Panc1 (cell line): ENCODE measurements at regions of chr2 and their contacts with region 1.

Region 1: DNA sequence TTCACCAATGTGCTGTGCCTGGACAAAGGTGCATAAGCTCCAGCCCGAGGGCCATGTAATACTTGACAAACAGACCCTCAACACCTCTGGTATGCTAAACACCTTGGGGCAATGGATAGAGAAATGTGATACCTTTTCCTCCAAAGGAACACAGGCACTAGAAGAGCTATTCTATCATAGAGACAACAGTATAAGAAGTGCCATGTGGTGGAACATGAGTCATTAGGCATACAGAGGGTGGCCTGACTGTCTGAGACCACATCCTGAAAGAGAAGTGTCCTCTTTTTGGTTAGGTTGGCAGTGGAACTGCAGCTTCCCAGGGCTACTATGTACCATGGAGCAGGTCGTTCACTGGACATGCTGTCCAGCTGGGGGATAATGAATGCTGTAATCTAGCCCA is 153.9 kb downstream of the INSIG2 start:
- DNase-seq: no peak
- ATAC-seq: no peak
- H3K4me3 ChIP-seq: no peak overlapping the region
- H3K27ac ChIP-seq: no peak overlapping the region
- H3K4me1 ChIP-seq: no peaks in the 10 kb centered on the region
- H3K27me3 ChIP-seq: no peaks in the 10 kb centered on the region
- CTCF ChIP-seq: no peak

Region 2: DNA sequence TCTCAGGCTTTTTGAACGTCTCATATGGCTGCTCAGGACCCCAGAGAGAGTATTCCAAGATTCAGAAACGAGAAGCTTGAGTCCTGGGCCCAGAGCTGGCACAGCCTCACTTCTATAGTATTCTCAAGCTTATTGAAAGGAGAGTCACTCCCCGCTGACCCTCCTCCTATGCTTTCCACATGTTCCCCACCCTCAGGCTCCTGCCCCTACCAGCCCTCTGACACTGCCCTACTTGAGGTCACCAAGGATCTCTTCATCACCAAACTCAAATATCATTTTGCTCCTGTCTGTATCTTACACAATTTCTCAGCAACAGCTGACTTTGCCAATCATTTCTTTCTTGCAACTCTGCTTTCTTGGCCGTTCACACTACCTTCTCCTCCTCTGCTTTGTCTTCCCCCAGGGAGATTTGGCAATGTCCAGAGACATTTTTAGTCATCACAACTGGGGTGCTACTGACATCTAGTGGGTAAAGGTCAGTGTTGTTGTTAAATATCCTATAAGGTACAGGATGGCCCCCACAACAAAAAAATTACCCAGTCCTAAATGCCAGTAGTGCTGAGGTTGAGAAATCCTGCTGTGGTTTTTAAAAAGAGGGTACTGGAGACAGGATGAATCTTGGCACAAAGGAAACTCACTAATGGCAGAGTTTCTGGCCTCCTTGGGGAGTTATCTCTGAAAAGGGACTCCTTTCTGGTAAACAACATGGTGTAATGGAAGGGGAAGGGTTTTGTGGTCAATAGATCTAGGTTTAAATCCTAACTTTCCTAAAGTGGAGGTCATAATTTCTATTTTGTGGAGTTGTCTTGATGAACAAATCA is 180.9 kb before region 1 on chr2:
- CTCF ChIA-PET with region 1: no interaction called
- POLR2A ChIA-PET with region 1: no interaction called
- in situ Hi-C with region 1: no loop called
- intact Hi-C with region 1: no loop called
- DNase-seq: peak; percentile 15
- ATAC-seq: no peak
- H3K4me3 ChIP-seq: no peak overlapping the region
- H3K27ac ChIP-seq: no peak overlapping the region
- H3K4me1 ChIP-seq: no peaks in the 10 kb centered on the region
- H3K27me3 ChIP-seq: peaks cover 5% of the 10 kb centered on the region
- CTCF ChIP-seq: peak; percentile 48

Region 3: DNA sequence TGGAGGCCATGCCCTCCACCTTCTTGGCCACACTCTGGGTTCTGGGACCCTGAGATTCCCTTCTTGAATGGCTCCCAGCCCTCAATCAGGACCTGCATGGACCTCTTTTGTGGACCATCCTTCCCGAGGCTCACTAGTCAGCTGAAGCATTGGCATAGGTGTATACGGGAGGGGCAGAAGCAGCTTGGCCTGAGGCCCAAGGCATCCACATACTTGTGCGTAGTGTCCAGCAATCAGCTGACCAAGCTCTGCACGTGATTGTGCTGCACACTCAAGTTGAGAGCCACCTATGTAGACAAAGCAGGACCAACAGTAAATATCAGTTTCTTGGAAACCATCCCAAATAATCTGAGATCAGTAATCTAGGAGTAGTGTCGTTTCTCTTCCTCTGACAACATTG is 34.3 kb before region 1 on chr2:
- CTCF ChIA-PET with region 1: interaction called, 11 read pairs
- POLR2A ChIA-PET with region 1: no interaction called
- in situ Hi-C with region 1: no loop called
- intact Hi-C with region 1: no loop called
- DNase-seq: no peak
- ATAC-seq: no peak
- H3K4me3 ChIP-seq: no peak overlapping the region
- H3K27ac ChIP-seq: no peak overlapping the region
- H3K4me1 ChIP-seq: no peaks in the 10 kb centered on the region
- H3K27me3 ChIP-seq: peaks cover 4% of the 10 kb centered on the region
- CTCF ChIP-seq: no peak

Region 4: GRCh38 chr2:118221666-118222594 is 20.3 kb before region 1 on chr2:
- CTCF ChIA-PET with region 1: no interaction called
- POLR2A ChIA-PET with region 1: no interaction called
- in situ Hi-C with region 1: no loop called
- intact Hi-C with region 1: no loop called
- DNase-seq: peak; percentile 64
- ATAC-seq: peak; percentile 94
- H3K4me3 ChIP-seq: no peak overlapping the region
- H3K27ac ChIP-seq: no peak overlapping the region
- H3K4me1 ChIP-seq: no peaks in the 10 kb centered on the region
- H3K27me3 ChIP-seq: peaks cover 24% of the 10 kb centered on the region
- CTCF ChIP-seq: peak; percentile 77